ENCODE measurements at regions of chr6 and their contacts with region 1.

Region 1: GRCh38 chr6:107021446-107022185 is 6.4 kb upstream of the MTRES1 start:
- DNase-seq: no peak
- CTCF ChIP-seq: no peak

Region 2: GRCh38 chr6:106608062-106608668 is 413.5 kb before region 1 on chr6:
- CTCF ChIA-PET with region 1: no interaction called
- POLR2A ChIA-PET with region 1: no interaction called
- DNase-seq: peak; percentile 51
- CTCF ChIP-seq: peak; percentile 78

Region 3: GRCh38 chr6:107033126-107033525 is 11.5 kb after region 1 on chr6:
- CTCF ChIA-PET with region 1: interaction called, 11 read pairs
- POLR2A ChIA-PET with region 1: no interaction called
- DNase-seq: no peak
- CTCF ChIP-seq: no peak

Measured in GM10248 (cell line).